HEK293 (cell line): ENCODE measurements at regions of chr15 and their contacts with region 1.

Region 1: GRCh38 chr15:33700695-33701304 is 267.5 kb upstream of the CHRM5 start:
- H3K4me3 ChIP-seq: no peak overlapping the region
- H3K27ac ChIP-seq: no peak overlapping the region
- H3K4me1 ChIP-seq: no peaks in the 10 kb centered on the region
- CTCF ChIP-seq: peak; percentile 82

Region 2: GRCh38 chr15:33226559-33227181 is 474.1 kb before region 1 on chr15:
- CTCF ChIA-PET with region 1: interaction called, 13 read pairs
- POLR2A ChIA-PET with region 1: no interaction called
- H3K4me3 ChIP-seq: no peak overlapping the region
- H3K27ac ChIP-seq: no peak overlapping the region
- H3K4me1 ChIP-seq: peaks cover 4% of the 10 kb centered on the region
- CTCF ChIP-seq: no peak

Region 3: GRCh38 chr15:33234014-33234461 is 466.8 kb before region 1 on chr15:
- CTCF ChIA-PET with region 1: interaction called, 28 read pairs
- POLR2A ChIA-PET with region 1: no interaction called
- H3K4me3 ChIP-seq: no peak overlapping the region
- H3K27ac ChIP-seq: no peak overlapping the region
- H3K4me1 ChIP-seq: no peaks in the 10 kb centered on the region
- CTCF ChIP-seq: peak; percentile 40; the same call in 1 of the 2 replicates

Region 4: DNA sequence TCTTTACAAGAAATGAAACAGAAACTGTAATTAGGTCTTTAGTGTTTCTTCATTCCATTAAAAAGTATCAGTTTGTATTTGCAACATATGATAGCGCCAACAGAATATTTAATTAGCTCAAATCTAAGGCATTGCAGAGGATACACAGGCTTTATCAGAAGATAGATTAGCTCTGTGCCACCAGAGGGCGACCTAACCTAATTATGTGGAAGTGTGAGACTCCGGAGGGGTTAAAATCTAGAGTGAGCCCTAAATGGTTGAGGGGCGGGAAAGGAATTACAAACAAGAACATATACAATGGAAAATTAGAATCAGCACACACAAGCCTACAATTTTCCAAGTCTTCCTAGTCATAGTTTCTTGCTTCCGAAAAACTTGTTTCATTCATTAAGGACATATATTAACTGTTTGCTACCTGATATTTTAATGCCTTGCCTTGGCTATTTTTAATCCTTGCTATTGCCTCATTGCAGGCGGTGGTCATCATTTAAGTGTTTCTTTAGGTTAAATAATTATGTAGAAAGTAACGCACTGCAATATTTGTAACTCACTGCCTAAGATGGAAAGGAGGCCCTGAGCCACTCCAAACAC is 408.0 kb before region 1 on chr15:
- CTCF ChIA-PET with region 1: interaction called, 41 read pairs
- POLR2A ChIA-PET with region 1: no interaction called
- H3K4me3 ChIP-seq: no peak overlapping the region
- H3K27ac ChIP-seq: no peak overlapping the region
- H3K4me1 ChIP-seq: no peaks in the 10 kb centered on the region
- CTCF ChIP-seq: no peak